K562 (cell line): ENCODE measurements at regions of chr4 and their contacts with region 1.

Region 1: GRCh38 chr4:44760142-44760898 is 34.0 kb upstream of the GNPDA2 start:
- DNase-seq: peak; percentile 13 to 42 (median 32)
- ATAC-seq: peak; percentile 82
- H3K4me3 ChIP-seq: no peak overlapping the region
- H3K27ac ChIP-seq: no peak overlapping the region
- H3K4me1 ChIP-seq: no peaks in the 10 kb centered on the region
- H3K27me3 ChIP-seq: no peaks in the 10 kb centered on the region
- CTCF ChIP-seq: peak in 2 of 3 experiments; percentile 8 to 54; a peak in 4 of 6 replicates
- EP300 ChIP-seq: no peak
- POLR2A ChIP-seq: no peak
- RAD21 ChIP-seq: peak; percentile 58 to 62

Region 2: GRCh38 chr4:46648088-46648744 is 1887.9 kb after region 1 on chr4:
- CTCF ChIA-PET with region 1: no interaction called
- POLR2A ChIA-PET with region 1: no interaction called
- in situ Hi-C with region 1: no loop called
- intact Hi-C with region 1: loop called (anchors 10 kb)
- DNase-seq: peak in 3 of 4 experiments; percentile 7 to 18 (median 9)
- ATAC-seq: 0 out of 3 replicates have a peak, but pooled peaks have one; percentile 27
- H3K4me3 ChIP-seq: no peak overlapping the region
- H3K27ac ChIP-seq: no peak overlapping the region
- H3K4me1 ChIP-seq: no peaks in the 10 kb centered on the region
- H3K27me3 ChIP-seq: no peaks in the 10 kb centered on the region
- CTCF ChIP-seq: peak in 2 of 3 experiments; percentile 22 to 31; a peak in 1 of 6 replicates
- EP300 ChIP-seq: no peak
- POLR2A ChIP-seq: no peak
- RAD21 ChIP-seq: peak in 1 of 2 experiments; percentile 29; a peak in 1 of 4 replicates